Calu3 (cell line): ENCODE measurements at regions of chr17 and their contacts with region 1.

Region 1: DNA sequence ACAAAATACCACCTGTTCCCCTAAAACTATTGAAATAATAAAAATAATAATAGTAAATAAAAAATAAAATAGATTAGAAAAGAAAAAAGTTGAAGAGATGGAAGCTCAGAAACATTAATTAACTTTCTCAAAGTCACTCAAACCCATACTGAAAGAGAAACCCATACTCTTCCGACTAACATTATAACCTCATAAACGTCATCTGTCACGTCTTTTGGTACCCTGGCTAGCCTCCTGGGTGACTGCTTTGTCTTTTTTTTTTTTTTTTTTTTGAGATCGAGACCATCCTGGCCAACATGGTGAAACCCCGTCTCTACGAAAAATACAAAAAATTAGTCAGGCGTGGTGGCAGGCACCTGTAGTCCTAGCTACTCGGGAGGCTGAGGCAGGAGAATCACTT is 7.6 kb downstream of the SLFN12L start:
- DNase-seq: no peak
- H3K4me3 Mint-ChIP-seq: no peak overlapping the region
- H3K27ac Mint-ChIP-seq: no peak overlapping the region
- H3K4me1 Mint-ChIP-seq: no peaks in the 10 kb centered on the region
- H3K27me3 Mint-ChIP-seq: peaks cover 34% of the 10 kb centered on the region
- CTCF ChIP-seq: no peak

Region 2: GRCh38 chr17:35229638-35230037 is 300.2 kb before region 1 on chr17:
- CTCF ChIA-PET with region 1: no interaction called
- intact Hi-C with region 1: no loop called
- DNase-seq: no peak
- H3K4me3 Mint-ChIP-seq: no peak overlapping the region
- H3K27ac Mint-ChIP-seq: no peak overlapping the region
- H3K4me1 Mint-ChIP-seq: no peaks in the 10 kb centered on the region
- H3K27me3 Mint-ChIP-seq: peaks cover 13% of the 10 kb centered on the region
- CTCF ChIP-seq: no peak

Region 3: GRCh38 chr17:35373534-35373983 is 156.3 kb before region 1 on chr17 and contains the start of gene SLFN11:
- CTCF ChIA-PET with region 1: no interaction called
- intact Hi-C with region 1: loop called (anchors 5 kb)
- DNase-seq: peak; percentile 57
- H3K4me3 Mint-ChIP-seq: peak within 1 kb of the TSS; percentile 92
- H3K27ac Mint-ChIP-seq: peak within 1 kb of the TSS; percentile 88
- H3K4me1 Mint-ChIP-seq: peaks cover 41% of the 10 kb centered on the region
- H3K27me3 Mint-ChIP-seq: no peaks in the 10 kb centered on the region
- CTCF ChIP-seq: no peak
- total RNA-seq, gene SLFN11: 35.3 and 38.2 TPM in 2 replicates

Region 4: DNA sequence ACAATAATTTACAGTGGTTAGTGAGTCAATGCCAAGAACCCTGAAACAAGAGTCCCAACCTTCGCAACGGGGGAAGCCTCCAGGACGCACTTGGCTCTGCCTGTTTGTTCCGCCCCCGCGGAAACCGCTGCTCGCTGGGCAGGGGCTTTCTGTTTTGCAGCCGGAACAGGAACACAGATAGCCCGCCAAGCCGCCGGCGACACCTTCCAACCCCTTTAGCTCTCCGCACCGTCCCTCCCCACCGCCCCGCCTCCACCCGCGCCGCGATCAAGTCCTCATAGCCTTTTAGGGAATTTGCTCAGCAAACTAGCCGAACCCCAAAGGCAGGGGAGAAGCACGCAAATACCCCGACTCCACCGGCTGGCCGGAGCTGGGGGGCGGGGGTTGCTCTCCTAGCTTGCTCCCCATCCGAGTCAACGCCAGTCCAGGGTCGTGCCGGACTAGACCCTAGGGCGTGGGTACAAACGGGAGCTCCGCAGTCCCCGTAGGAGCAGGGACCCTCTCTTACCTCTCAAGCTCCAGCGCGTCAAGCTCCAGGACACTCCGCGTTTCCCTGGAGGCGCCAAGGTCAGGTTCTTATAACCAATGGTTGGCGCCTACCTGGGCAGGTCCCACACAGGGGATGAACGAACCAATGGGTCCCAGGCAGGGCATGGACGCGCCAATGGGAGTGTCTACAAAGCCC is 81.5 kb before region 1 on chr17 and contains the start of gene SLFN13:
- CTCF ChIA-PET with region 1: no interaction called
- intact Hi-C with region 1: loop called (anchors 5 kb)
- DNase-seq: peak; percentile 79
- H3K4me3 Mint-ChIP-seq: peak within 1 kb of the TSS; percentile 74
- H3K27ac Mint-ChIP-seq: peak within 1 kb of the TSS; percentile 77
- H3K4me1 Mint-ChIP-seq: peaks cover 9% of the 10 kb centered on the region
- H3K27me3 Mint-ChIP-seq: no peaks in the 10 kb centered on the region
- CTCF ChIP-seq: no peak
- total RNA-seq, gene SLFN13: 44.4 and 46.2 TPM in 2 replicates